H1 (cell line): ENCODE measurements at regions of chr20 and their contacts with region 1.

Region 1: DNA sequence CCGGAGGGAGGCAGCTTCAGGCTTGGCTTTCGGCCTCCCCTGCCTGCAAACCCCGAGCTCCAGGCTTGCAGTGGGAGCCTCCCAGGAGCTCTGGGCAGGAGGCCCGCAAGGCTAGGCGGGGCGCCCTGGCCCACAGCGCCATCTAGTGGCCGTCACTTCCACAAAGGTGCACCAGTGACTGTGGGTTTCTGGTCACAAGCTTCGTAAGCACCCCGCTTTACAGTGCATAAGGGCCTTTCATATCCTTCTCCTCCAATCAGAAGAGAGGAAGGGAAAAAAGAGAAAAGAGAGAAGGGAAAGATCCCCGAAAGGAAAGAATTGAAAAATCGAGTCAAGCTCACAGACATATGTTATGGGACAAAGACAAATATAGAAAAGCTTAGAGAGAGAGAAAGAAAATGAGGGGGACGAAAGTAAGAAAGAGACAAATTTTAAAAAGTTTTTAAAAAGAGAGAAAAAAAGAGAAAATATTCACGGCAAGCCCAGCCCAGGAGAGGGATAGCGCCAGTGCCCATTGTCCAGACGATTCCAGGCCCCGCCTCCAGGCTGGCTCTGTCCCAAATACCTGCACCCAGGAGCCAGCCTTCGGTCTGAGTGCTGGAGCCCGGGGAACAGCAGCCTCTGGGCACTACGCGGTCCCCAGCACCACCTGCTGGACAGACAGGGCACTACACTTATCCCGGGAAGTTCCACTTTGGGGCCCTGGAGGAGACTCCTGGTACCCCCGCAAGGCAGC is 207.1 kb downstream of the PREX1 start:
- DNase-seq: peak; percentile 84 to 98
- H3K4me3 ChIP-seq: peak overlapping the region in 3 of 4 experiments; percentile 28 to 59 (median 36); a peak in 4 of 8 replicates
- H3K27ac ChIP-seq: no peak overlapping the region
- H3K4me1 ChIP-seq: peaks cover 0 to 5% (median 2%) of the 10 kb centered on the region in 4 experiments; a peak in 3 of 7 replicates
- H3K27me3 ChIP-seq: no peaks in the 10 kb centered on the region
- CTCF ChIP-seq: peak; percentile 93 to 98 (median 96)
- EP300 ChIP-seq: peak in 1 of 2 experiments; percentile 17; a peak in 1 of 3 replicates
- POLR2A ChIP-seq: no peak
- RAD21 ChIP-seq: peak; percentile 99

Region 2: GRCh38 chr20:47854163-47854562 is 766.5 kb before region 1 on chr20:
- CTCF ChIA-PET with region 1: interaction called, 10 read pairs
- POLR2A ChIA-PET with region 1: no interaction called
- DNase-seq: no peak
- H3K4me3 ChIP-seq: no peak overlapping the region
- H3K27ac ChIP-seq: no peak overlapping the region
- H3K4me1 ChIP-seq: no peaks in the 10 kb centered on the region; a peak in 1 of 7 replicates
- H3K27me3 ChIP-seq: no peaks in the 10 kb centered on the region
- CTCF ChIP-seq: no peak
- EP300 ChIP-seq: no peak
- POLR2A ChIP-seq: no peak
- RAD21 ChIP-seq: no peak

Region 3: DNA sequence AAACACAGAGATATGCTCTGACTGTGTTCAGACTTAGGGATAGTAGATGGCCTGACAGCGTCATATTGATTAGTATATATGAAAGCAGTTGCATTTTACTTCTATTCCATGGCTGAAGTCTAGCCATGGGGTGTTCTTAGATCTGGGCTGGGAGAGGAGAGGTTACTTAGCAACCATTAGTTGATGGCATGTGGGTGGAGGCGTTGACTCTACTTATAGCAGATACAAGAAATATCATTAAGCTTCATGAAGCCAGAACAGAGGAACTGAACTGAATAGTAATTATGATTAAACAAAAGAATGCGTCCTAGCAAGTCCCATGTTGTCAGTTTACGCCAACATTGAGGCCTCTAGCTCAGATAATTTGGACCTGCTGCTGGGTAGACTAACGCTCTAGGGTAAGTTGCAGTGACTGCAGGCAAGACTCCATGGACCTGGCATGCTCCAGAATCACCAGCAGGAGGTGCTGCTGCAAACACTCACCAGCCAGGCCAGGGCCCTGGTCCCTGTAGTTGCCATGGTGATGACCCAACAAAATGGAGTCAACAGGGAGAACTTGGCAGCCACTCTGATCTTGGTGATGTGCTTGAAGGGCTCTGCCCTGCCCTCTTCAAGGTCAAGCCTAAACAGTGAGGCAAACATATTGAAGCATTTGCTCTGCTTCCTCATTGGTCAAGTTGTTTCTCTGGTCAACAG is 270.2 kb before region 1 on chr20:
- CTCF ChIA-PET with region 1: interaction called, 13 read pairs
- POLR2A ChIA-PET with region 1: no interaction called
- DNase-seq: peak; percentile 29 to 71
- H3K4me3 ChIP-seq: no peak overlapping the region
- H3K27ac ChIP-seq: 0 out of 2 replicates have a peak overlapping the region, but pooled peaks have one; percentile 38
- H3K4me1 ChIP-seq: no peaks in the 10 kb centered on the region
- H3K27me3 ChIP-seq: no peaks in the 10 kb centered on the region
- CTCF ChIP-seq: peak; percentile 74 to 95 (median 90)
- EP300 ChIP-seq: no peak
- POLR2A ChIP-seq: no peak
- RAD21 ChIP-seq: peak; percentile 80

Region 4: DNA sequence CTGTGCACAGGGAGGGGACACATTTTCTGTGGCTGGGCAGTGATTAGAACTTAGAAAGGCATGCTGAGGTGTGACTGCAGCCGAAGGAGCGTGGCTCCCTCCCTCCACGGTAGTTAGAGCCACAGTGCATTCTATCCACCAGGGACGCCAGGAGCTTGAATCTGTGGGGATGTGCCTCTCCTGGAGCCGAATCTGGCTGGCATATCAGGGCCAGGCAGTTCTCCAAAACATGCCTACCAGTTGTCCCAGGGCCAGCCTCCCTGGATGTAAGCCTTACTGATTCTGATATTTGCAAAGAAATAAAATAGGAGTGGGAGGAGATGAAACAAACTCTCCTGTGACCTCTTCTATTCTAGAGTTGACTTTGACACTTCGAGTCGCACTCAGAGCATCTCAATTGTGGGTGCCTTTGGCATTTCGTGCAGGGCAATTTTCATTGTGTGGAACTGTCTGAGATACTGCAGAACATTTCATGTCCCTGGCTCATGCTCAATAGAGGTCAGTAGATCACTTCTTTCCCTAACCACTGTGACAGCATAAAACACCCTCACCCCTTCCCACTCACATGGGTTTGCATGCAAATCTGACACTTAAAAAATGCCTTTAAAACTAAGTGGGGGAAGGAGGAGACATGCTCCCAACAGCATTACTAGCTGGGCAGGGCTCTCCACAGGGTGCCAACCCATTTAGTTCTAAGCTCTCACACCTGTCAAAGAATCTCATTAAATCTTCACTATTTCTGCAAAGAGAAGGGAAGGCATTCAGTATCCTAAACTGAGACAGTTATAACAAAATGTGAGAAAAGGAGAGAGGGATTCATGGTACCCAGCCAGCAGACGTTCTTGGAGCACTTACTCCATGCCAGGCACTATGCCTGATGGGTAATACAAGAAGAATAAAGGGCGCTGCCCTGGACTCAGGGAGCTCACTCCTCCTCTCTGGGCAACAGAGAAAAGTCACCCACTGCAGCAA is 171.8 kb before region 1 on chr20:
- CTCF ChIA-PET with region 1: interaction called, 15 read pairs
- POLR2A ChIA-PET with region 1: no interaction called
- DNase-seq: no peak
- H3K4me3 ChIP-seq: no peak overlapping the region
- H3K27ac ChIP-seq: no peak overlapping the region
- H3K4me1 ChIP-seq: no peaks in the 10 kb centered on the region
- H3K27me3 ChIP-seq: no peaks in the 10 kb centered on the region
- CTCF ChIP-seq: peak in 1 of 3 experiments; percentile 29; a peak in 1 of 4 replicates
- EP300 ChIP-seq: no peak
- POLR2A ChIP-seq: no peak
- RAD21 ChIP-seq: no peak; a peak in 1 of 4 replicates

Region 5: GRCh38 chr20:48568143-48568919 is 52.4 kb before region 1 on chr20:
- CTCF ChIA-PET with region 1: interaction called, 15 read pairs
- POLR2A ChIA-PET with region 1: no interaction called
- DNase-seq: no peak
- H3K4me3 ChIP-seq: no peak overlapping the region
- H3K27ac ChIP-seq: no peak overlapping the region
- H3K4me1 ChIP-seq: no peaks in the 10 kb centered on the region
- H3K27me3 ChIP-seq: no peaks in the 10 kb centered on the region
- CTCF ChIP-seq: no peak
- EP300 ChIP-seq: no peak
- POLR2A ChIP-seq: no peak
- RAD21 ChIP-seq: no peak

Region 6: DNA sequence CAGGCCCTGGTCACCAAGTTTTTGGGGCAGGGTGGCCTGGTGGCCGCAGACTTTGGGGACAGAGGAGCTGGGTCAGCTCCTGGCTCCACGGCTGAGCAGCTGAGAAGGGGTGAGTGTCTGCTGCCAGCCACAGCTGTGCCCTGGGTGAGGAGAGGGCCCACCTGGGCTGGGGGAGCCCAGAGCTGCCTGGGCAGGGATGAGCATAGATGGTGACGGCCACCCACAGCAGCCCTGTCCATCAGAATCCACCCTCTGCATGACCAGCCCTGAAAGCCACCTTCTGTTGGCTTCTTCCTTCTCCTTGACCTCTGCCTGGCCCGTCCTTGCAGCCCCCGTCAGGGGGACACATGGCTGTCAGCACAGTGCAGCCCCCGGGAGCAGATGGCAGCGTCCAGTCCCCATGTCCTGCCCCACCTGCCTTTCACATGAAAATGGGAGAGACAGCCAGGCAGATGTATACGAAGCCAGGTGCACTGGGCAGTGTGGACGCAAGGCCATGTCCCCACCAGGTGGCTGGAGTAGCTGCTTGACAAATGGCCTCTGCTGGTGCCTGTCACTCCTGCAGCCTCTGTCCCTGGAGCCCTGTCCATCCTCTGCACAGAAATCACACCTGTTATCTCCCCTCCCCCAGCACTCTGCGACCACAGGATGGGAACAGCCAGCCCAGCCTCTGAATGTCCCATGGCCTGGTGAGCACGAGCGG is 13.7 kb before region 1 on chr20:
- CTCF ChIA-PET with region 1: interaction called, 16 read pairs
- POLR2A ChIA-PET with region 1: no interaction called
- DNase-seq: no peak
- H3K4me3 ChIP-seq: no peak overlapping the region
- H3K27ac ChIP-seq: no peak overlapping the region
- H3K4me1 ChIP-seq: peaks cover 2 to 7% (median 5%) of the 10 kb centered on the region in 4 experiments; a peak in 6 of 7 replicates
- H3K27me3 ChIP-seq: no peaks in the 10 kb centered on the region
- CTCF ChIP-seq: no peak
- EP300 ChIP-seq: no peak
- POLR2A ChIP-seq: no peak
- RAD21 ChIP-seq: no peak